ENCODE measurements at regions of chr17 and their contacts with region 1.

Region 1: DNA sequence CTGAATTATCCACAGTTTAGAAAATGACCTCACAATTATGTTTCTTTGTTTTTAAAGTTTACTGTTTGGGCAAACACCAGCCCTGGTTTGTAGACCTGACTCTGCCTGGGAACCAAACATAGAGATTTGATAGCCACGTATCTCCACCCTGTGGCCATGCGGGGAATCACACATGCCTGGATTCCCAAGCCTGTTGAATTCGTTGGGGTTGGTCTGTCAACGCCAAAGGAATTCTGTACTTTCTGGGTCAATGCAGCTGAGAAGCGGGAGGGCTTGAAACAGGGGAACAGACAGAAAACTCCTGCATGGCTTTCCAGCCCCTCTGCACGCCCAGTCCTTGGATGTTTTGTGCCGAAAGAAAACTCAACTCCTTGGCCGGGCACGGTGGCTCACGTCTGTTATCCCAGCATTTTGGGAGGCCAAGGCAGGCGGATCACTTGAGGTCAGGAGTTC is 27.0 kb downstream of the CD300A start:
- DNase-seq: peak; percentile 76
- CTCF ChIP-seq: peak; percentile 92

Region 2: GRCh38 chr17:74467221-74467951 is 26.0 kb before region 1 on chr17:
- CTCF ChIA-PET with region 1: interaction called, 10 read pairs
- POLR2A ChIA-PET with region 1: no interaction called
- DNase-seq: peak; percentile 82
- CTCF ChIP-seq: no peak

Region 3: DNA sequence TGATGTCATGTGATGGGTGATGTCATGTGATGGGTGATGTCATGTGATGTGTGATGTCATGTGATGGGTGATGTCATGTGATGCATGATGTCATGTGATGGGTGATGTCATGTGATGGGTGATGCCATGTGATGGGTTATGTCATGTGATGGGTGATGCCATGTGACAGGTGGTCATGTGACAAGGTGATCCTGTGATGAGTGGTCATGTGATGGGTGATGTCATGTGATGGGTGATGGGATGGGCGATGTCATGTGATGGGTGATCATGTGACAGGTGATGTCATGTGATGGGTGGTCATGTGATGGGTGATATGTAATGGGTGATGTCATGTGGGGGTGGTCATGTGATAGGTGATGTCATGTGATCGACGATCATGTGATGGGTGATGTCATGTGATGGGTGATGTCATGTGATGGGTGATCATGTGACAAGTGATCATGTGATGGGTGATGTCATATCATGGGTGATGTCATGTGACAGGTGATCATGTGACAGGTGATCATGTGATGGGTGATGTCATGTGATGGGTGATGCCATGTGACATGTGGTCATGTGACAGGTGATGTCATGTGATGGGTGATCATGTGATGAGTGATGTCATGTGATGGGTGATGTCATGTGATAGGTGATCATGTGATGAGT is 20.7 kb after region 1 on chr17:
- CTCF ChIA-PET with region 1: interaction called, 10 read pairs
- POLR2A ChIA-PET with region 1: no interaction called
- DNase-seq: peak; percentile 18
- CTCF ChIP-seq: no peak